HCT116 (cell line): ENCODE measurements at regions of chr20 and their contacts with region 1.

Region 1: DNA sequence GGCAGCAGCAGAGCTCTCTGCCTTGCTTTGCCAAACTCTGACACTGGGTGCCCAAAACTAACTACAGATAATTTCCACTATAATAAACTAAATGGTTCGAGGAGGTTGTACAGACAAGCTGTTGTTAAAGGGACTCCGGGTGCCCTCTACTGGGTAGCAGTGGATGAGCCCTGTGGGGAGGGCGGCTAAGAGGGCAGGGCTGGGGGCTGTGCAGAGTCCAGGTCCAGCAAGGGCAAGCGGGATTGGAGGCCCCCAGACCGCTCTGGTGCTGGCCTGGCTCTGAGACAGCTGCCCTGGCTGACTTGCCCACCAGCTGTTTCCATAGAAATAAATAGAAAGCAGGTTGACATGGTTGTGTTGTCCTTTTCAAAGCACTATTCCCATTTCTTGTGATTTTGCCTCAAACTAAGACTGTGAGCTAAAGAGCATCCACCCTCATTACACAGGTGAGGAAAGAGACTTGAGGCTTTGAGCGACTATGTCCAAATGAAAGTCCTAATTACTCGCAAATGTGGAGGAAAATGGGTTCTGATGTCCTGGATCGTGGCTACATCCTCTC is 167.6 kb upstream of the CST7 start:
- DNase-seq: no peak
- ATAC-seq: peak; percentile 81
- H3K4me3 ChIP-seq: no peak overlapping the region
- H3K27ac ChIP-seq: no peak overlapping the region
- H3K4me1 ChIP-seq: no peaks in the 10 kb centered on the region
- H3K27me3 ChIP-seq: peaks cover 20% of the 10 kb centered on the region; the same call in 1 of the 2 replicates
- CTCF ChIP-seq: peak; percentile 30 to 57 (median 51); a peak in 5 of 6 replicates
- POLR2A ChIP-seq: no peak
- RAD21 ChIP-seq: peak; percentile 63

Region 2: DNA sequence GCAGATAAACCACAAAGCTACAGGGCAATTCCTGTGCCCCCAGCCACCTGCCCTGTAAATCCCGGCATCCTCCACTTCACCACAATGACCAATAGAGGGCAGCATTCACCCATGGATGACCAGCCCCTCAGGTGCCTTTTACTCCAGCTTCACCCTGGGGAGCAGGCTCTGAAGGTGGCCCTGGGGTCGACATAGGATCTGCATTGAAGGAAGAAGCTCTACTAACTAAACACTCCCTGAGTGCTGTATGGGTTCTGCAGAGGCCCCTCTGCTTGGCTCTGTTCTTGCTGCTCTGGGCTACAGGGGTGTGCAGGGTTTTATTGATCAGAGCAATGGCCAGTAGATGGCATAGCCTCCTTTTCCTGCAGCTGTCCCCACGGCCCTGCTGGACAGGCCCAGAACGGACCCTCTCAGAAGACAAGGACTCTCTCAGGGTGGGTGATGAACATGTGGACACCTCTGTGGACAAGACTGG is 1113.0 kb before region 1 on chr20:
- CTCF ChIA-PET with region 1: no interaction called
- POLR2A ChIA-PET with region 1: no interaction called
- RAD21 ChIA-PET with region 1: no interaction called
- intact Hi-C with region 1: loop called (anchors 5 kb)
- DNase-seq: peak; percentile 54
- ATAC-seq: peak; percentile 95
- H3K4me3 ChIP-seq: no peak overlapping the region
- H3K27ac ChIP-seq: no peak overlapping the region
- H3K4me1 ChIP-seq: no peaks in the 10 kb centered on the region
- H3K27me3 ChIP-seq: peaks cover 2% of the 10 kb centered on the region; the same call in 1 of the 2 replicates
- CTCF ChIP-seq: peak; percentile 81 to 92 (median 89)
- POLR2A ChIP-seq: no peak
- RAD21 ChIP-seq: peak; percentile 77

Region 3: DNA sequence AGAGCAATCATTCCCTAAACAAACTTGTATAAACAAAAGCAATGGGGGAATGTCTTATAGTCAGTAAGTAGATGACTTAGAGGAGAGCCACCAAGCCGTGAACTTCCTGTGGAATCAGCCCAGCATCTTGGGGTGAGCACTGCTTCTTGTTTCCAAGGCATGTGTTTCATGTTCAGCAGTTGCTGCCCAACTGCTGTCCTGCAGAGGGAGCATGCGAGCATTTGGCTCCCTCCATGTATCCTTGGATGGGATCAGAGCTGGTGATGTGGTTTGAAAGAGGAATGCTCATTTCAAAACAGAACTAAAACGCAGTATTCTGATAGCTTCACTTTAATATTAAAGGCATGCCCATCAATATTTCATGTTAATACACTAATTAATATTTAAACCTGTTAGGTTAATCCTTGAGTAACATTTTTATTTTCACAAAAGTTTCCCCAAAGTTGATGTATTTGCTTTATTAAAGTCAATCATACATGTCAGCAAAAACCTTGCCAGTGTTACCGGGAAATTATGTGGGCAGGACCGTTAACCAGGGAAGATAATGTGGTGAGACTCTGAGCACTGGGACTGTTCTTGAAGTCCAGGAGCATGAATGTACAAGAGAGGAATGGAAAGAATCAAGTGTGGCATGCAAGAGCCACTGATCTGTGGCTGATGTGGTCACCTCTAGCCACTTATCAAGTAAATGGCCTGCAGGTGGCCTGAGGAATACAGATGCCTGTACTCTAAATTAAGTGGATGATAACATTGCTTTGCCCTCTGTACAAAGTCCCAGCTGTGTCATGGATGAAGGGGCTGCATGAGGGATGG is 620.7 kb before region 1 on chr20:
- CTCF ChIA-PET with region 1: no interaction called
- POLR2A ChIA-PET with region 1: no interaction called
- RAD21 ChIA-PET with region 1: no interaction called
- intact Hi-C with region 1: loop called (anchors 5 kb)
- DNase-seq: no peak
- ATAC-seq: no peak
- H3K4me3 ChIP-seq: no peak overlapping the region
- H3K27ac ChIP-seq: no peak overlapping the region
- H3K4me1 ChIP-seq: no peaks in the 10 kb centered on the region
- H3K27me3 ChIP-seq: no peaks in the 10 kb centered on the region
- CTCF ChIP-seq: peak in 2 of 3 experiments; percentile 53 to 58; a peak in 4 of 6 replicates
- POLR2A ChIP-seq: no peak
- RAD21 ChIP-seq: 0 out of 2 replicates have a peak, but pooled peaks have one; percentile 6

Region 4: GRCh38 chr20:24522452-24523330 is 258.8 kb before region 1 on chr20:
- CTCF ChIA-PET with region 1: no interaction called
- POLR2A ChIA-PET with region 1: no interaction called
- RAD21 ChIA-PET with region 1: no interaction called
- intact Hi-C with region 1: no loop called
- DNase-seq: no peak
- ATAC-seq: no peak
- H3K4me3 ChIP-seq: no peak overlapping the region
- H3K27ac ChIP-seq: no peak overlapping the region
- H3K4me1 ChIP-seq: no peaks in the 10 kb centered on the region
- H3K27me3 ChIP-seq: peaks cover 8% of the 10 kb centered on the region; the same call in 1 of the 2 replicates
- CTCF ChIP-seq: no peak
- POLR2A ChIP-seq: no peak
- RAD21 ChIP-seq: no peak

Region 5: DNA sequence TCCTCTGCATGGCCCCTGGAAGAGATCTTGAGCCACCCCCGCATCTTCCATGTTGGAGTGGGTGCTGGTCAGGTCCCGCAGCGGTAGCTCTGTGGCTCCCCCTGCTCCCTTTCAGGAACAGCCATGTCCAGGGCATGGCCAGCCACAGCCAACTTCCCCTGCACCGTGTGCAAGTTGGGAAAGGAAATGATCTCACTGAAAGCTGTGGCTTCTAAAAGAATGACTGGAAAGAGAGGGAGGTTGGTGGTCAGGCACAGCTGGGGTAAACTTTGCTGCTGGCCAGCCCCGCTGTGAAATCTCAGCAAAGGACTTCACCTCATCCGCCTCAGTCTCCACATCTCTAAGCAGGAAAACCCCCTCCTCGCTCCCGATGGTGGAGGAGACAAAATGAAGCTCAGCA is 13.9 kb after region 1 on chr20:
- CTCF ChIA-PET with region 1: no interaction called
- POLR2A ChIA-PET with region 1: no interaction called
- RAD21 ChIA-PET with region 1: no interaction called
- intact Hi-C with region 1: no loop called
- DNase-seq: no peak
- ATAC-seq: no peak
- H3K4me3 ChIP-seq: no peak overlapping the region
- H3K27ac ChIP-seq: no peak overlapping the region
- H3K4me1 ChIP-seq: no peaks in the 10 kb centered on the region
- H3K27me3 ChIP-seq: peaks cover 65% of the 10 kb centered on the region
- CTCF ChIP-seq: no peak
- POLR2A ChIP-seq: no peak
- RAD21 ChIP-seq: no peak

Region 6: DNA sequence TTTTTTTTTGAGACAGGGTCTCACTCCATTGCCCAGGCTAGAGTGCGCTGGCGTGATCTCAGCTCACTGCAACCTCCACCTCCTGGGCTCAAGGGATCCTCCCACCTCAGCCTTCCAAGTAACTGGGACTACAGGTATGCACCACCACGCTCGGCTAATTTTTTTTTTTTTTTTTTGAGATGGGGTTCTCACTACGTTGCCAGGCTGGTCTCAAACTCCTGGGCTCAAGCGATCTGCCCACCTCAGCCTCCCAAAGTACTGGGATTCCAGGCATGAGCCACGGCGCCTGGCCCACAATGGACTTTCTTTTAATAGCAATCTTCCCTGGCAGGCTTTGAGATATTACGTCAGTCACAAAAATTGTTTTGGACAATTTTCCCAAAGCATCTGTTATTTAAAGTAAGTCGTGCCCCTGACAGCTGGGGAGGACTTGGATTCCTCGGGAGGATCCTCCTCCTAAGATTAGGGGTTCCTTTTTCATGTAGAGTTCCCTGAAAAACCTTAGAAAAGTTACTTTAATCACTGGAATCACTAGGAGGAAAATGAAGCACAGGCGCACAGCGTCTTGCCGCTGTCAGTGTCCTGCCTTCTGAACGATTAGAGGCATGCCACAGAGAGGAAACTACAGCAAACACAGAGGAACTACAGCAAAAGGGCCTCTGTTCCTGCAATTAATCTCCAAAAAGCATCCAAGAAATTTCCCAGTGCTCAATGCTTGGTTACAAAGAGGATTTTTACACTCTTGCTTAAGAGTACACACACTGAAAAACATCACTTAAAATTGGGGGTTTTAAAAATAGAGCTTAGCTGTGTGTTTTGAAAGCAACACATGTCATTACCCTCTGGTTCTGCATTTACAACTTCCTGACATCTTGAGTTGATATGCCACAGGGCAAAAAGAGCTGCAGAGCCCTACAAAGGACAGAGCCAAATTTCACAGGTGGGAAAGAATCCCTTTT is 271.9 kb after region 1 on chr20:
- CTCF ChIA-PET with region 1: no interaction called
- POLR2A ChIA-PET with region 1: no interaction called
- RAD21 ChIA-PET with region 1: no interaction called
- intact Hi-C with region 1: no loop called
- DNase-seq: no peak
- ATAC-seq: no peak
- H3K4me3 ChIP-seq: no peak overlapping the region
- H3K27ac ChIP-seq: no peak overlapping the region
- H3K4me1 ChIP-seq: no peaks in the 10 kb centered on the region
- H3K27me3 ChIP-seq: peaks cover 3% of the 10 kb centered on the region
- CTCF ChIP-seq: no peak
- POLR2A ChIP-seq: no peak
- RAD21 ChIP-seq: no peak